B cell (primary cell): ENCODE measurements at regions of chr11 and their contacts with region 1.

Region 1: DNA sequence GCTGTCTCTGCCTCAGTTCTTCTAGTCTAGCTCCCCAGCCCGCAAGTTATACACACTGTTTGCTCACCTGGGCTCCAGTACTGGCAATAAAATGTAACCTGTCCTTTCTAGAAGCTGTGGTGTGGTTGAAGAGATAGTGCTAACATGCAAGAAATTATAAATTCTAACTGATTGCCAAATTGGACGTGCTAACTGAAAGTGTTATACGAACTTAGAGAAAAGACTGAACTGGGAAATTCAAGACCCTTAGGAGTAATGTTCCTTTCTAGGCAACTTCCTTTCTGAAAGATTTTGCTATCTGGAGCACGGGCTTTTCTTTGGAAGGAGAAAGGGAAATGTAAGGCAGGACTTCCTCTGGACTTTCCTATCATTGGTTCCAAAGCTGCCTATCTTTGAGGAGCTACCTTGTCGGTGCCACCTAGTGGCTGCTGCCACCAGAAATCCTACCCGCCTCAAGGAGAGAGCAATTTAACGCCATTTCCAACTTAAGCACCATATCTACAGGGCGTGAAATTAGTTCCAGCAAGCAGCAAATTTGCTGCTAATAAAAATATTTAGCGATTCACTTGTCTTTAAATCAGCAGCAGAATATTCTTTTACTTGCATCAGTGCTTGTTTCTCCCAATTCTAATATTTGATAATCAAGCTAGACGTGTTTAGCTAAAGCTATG is 12.7 kb upstream of the TMEM218 start:
- DNase-seq: peak; percentile 60
- ATAC-seq: peak; percentile 68
- H3K4me3 ChIP-seq: no peak overlapping the region
- H3K4me3 Mint-ChIP-seq: peak overlapping the region; percentile 69
- H3K27ac ChIP-seq: no peak overlapping the region
- H3K27ac Mint-ChIP-seq: no peak overlapping the region
- H3K4me1 ChIP-seq: peaks cover 9 to 12% of the 10 kb centered on the region in 2 donors
- H3K4me1 Mint-ChIP-seq: peaks cover 13% of the 10 kb centered on the region
- H3K27me3 ChIP-seq: peaks cover 0 to 35% (median 7%) of the 10 kb centered on the region in 4 experiments
- H3K27me3 Mint-ChIP-seq: peaks cover 54% of the 10 kb centered on the region
- CTCF ChIP-seq: peak; percentile 55

Region 2: DNA sequence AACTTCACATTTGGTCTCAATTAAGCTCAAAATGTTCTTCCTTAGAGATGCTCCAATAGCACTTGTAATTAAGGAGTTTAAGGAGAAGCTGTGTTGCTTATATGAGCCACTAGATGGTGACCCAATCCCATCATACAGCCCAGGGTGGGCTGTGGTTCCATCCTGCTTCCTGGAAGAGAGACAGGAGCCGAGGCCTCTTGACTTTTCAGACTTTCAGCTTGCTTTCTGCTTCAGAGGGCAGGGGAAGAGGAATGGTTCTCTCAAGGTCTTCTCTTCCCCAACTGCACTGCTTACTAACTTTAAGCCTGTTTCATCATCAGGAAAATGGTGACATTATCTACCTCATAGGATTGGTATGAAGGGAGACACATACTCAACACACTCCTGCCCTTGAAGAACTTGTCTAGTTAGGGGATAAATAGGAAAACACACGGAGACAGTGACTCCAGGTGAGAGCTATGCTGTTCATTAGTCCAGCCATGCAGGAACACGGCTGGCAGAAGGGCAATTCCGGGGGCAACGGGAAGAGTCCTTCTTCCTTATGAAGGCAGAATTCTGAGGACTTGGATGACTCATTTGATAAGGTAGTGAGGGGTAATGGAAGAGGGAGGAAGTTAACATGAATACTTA is 32.7 kb before region 1 on chr11:
- CTCF ChIA-PET with region 1: interaction called, 19 read pairs
- POLR2A ChIA-PET with region 1: no interaction called
- intact Hi-C with region 1: no loop called
- DNase-seq: peak; percentile 29
- ATAC-seq: peak; percentile 28
- H3K4me3 ChIP-seq: no peak overlapping the region
- H3K4me3 Mint-ChIP-seq: no peak overlapping the region
- H3K27ac ChIP-seq: no peak overlapping the region
- H3K27ac Mint-ChIP-seq: no peak overlapping the region
- H3K4me1 ChIP-seq: no peaks in the 10 kb centered on the region
- H3K4me1 Mint-ChIP-seq: no peaks in the 10 kb centered on the region
- H3K27me3 ChIP-seq: no peaks in the 10 kb centered on the region
- H3K27me3 Mint-ChIP-seq: no peaks in the 10 kb centered on the region
- CTCF ChIP-seq: peak; percentile 25

Region 3: DNA sequence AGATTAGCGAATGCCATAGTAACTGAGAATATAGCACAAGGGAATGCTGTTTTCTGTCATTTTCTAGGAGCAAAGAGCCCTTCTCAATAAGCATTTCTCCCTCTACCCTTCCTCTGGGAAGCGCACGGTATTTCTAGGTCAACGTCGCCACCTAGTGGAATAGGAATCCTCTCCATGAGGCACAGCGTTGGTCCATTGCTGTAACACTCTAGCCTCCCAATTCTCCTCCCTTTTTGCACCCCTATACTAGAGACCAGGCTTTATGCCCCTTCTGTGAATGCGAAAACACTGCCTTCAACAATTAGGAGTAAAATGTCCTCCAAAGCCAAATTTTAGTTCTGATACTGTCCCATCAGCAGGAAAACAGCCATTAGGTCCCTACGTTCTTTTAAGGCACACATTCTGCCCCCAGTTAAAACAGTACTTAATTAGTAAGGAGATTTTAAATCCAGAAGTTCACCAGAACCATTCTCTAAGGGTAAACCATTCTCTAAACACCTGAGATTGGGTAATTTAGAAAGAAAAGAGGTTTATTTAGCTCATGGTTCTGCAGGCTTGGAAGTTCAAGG is 750.6 kb after region 1 on chr11:
- CTCF ChIA-PET with region 1: no interaction called
- POLR2A ChIA-PET with region 1: no interaction called
- intact Hi-C with region 1: no loop called
- DNase-seq: peak; percentile 63
- ATAC-seq: peak; percentile 49
- H3K4me3 ChIP-seq: no peak overlapping the region
- H3K4me3 Mint-ChIP-seq: no peak overlapping the region
- H3K27ac ChIP-seq: no peak overlapping the region
- H3K27ac Mint-ChIP-seq: no peak overlapping the region
- H3K4me1 ChIP-seq: peaks cover 0 to 3% of the 10 kb centered on the region in 2 donors
- H3K4me1 Mint-ChIP-seq: peaks cover 10% of the 10 kb centered on the region
- H3K27me3 ChIP-seq: no peaks in the 10 kb centered on the region
- H3K27me3 Mint-ChIP-seq: no peaks in the 10 kb centered on the region
- CTCF ChIP-seq: peak; percentile 74